ENCODE measurements at regions of chr12 and their contacts with region 1.

Region 1: GRCh38 chr12:93378373-93379325 is 924 bp downstream of the NUDT4 start:
- DNase-seq: peak; percentile 76
- ATAC-seq: peak; percentile 65
- H3K4me3 Mint-ChIP-seq: peak overlapping the region; percentile 92
- H3K27ac Mint-ChIP-seq: peak overlapping the region; percentile 99
- H3K4me1 Mint-ChIP-seq: peaks cover 37% of the 10 kb centered on the region
- H3K27me3 Mint-ChIP-seq: no peaks in the 10 kb centered on the region
- CTCF ChIP-seq: no peak

Region 2: DNA sequence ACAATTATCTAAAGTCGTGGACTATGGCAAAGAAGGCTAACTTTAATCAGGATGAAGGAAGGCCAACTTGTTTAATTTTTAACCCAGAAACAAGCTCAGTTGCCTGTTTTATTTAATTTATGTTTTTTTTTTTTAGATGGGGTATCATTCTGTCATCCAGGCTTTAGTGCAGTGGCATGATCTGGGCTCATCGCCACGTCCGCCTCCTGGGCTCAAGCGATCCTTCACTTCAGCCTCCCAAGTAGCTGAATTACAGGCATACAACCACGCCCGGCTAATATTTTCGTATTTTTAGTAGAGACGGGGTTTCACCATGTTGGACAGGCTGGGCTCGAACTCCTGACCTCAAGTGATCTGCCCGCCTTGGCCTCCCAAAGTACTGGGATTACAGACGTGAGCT is 18.8 kb after region 1 on chr12:
- CTCF ChIA-PET with region 1: interaction called, 27 read pairs
- POLR2A ChIA-PET with region 1: interaction called, 4 read pairs
- intact Hi-C with region 1: no loop called
- DNase-seq: no peak
- ATAC-seq: no peak
- H3K4me3 Mint-ChIP-seq: no peak overlapping the region
- H3K27ac Mint-ChIP-seq: no peak overlapping the region
- H3K4me1 Mint-ChIP-seq: peaks cover 7% of the 10 kb centered on the region
- H3K27me3 Mint-ChIP-seq: no peaks in the 10 kb centered on the region
- CTCF ChIP-seq: no peak

Region 3: DNA sequence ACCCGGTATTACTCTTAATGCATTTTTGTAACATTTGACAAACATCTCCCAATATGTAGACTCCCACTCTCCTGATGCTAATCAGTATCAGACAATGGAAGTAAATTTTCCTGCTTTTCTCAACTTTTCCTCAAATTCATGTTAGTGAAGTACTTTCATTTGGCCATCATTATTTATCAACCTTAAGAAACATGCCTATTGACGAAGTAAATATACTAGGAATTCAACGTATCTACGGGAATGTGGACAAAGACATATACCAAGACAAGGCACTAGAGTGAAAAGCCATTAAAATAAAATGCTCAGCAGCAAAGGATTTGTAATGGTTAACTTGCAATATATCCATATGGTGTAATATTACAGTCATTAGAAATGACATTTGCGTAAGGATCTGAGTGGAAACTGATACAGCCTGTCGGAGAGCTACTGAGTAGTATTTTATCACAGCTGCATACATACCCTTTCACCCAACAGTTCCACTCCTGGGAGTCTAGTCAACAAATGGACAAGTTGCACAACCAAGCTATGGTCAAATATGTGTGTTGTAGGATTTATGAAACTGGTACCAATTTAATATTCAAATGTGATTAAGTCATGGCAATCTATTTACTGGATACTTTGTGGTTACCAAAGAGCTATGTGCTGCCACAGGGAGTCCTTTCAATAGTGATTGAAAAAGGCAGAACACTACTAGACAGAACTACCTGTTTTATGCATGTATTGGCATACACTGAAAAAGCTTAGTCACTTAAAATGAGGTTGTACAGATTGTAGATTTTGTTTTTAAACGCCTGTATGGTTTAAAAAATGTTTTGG is 25.5 kb after region 1 on chr12:
- CTCF ChIA-PET with region 1: interaction called, 12 read pairs
- POLR2A ChIA-PET with region 1: no interaction called
- intact Hi-C with region 1: no loop called
- DNase-seq: no peak
- ATAC-seq: no peak
- H3K4me3 Mint-ChIP-seq: no peak overlapping the region
- H3K27ac Mint-ChIP-seq: peak overlapping the region; percentile 57
- H3K4me1 Mint-ChIP-seq: peaks cover 22% of the 10 kb centered on the region
- H3K27me3 Mint-ChIP-seq: no peaks in the 10 kb centered on the region
- CTCF ChIP-seq: no peak

Region 4: GRCh38 chr12:93441617-93442410 is 63.2 kb after region 1 on chr12 and contains the start of gene UBE2N:
- CTCF ChIA-PET with region 1: no interaction called
- POLR2A ChIA-PET with region 1: interaction called, 3 read pairs
- intact Hi-C with region 1: loop called (anchors 5 kb)
- DNase-seq: peak; percentile 96
- ATAC-seq: peak; percentile 86
- H3K4me3 Mint-ChIP-seq: peak within 1 kb of the TSS; percentile 99
- H3K27ac Mint-ChIP-seq: peak within 1 kb of the TSS; percentile 98
- H3K4me1 Mint-ChIP-seq: peaks cover 48% of the 10 kb centered on the region
- H3K27me3 Mint-ChIP-seq: no peaks in the 10 kb centered on the region
- CTCF ChIP-seq: no peak
- total RNA-seq, gene UBE2N: 186 to 192 TPM

Measured in activated CD8-positive, alpha-beta T cell treated with anti-CD3 and anti-CD28 coated beads for 36 hours (primary cell).